AG04450 (cell line): ENCODE measurements at regions of chr6 and their contacts with region 1.

Region 1: DNA sequence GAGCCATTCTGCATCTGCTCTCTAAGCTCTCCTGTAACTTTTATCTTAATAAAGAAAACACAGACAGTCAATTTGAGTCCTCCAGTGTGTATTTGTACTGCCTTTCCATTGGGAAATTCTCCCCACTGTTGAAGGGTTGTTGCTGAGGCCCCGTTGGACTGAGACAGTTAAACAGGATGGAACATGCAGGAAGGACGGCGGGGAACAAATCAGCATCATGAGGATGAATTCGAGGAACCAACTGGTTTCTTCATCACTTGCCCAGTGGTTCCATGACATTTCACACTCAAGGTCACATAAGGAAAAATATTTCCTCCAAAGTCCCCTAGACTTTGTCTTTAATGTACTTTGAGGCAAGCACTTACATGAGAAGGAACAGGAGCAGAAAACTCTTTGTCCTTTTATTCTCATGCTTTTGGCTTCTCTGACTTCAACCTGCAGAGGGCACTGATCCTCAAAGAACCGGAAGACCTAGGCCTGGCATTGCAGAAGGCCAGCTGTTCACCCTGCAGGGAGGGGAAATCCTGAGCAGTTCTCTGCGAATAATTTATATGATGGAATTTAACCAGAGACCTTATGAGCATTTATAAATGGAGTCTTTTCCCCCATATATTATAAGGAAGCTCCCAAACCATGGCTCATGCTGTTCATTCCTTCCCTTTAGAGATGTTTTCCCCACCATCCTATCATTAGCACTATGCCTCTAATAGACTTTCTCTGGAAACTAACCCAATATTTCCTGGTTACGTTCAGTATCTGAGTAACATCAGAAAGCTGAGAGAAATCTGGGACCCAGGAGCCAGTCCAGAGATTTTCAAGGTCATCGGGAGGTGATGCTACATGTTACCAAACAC is 55.2 kb upstream of the ADGRF1 start:
- DNase-seq: peak; percentile 78
- H3K4me3 ChIP-seq: no peak overlapping the region
- H3K27ac ChIP-seq: no peak overlapping the region
- H3K27me3 ChIP-seq: no peaks in the 10 kb centered on the region
- CTCF ChIP-seq: peak; percentile 83

Region 2: DNA sequence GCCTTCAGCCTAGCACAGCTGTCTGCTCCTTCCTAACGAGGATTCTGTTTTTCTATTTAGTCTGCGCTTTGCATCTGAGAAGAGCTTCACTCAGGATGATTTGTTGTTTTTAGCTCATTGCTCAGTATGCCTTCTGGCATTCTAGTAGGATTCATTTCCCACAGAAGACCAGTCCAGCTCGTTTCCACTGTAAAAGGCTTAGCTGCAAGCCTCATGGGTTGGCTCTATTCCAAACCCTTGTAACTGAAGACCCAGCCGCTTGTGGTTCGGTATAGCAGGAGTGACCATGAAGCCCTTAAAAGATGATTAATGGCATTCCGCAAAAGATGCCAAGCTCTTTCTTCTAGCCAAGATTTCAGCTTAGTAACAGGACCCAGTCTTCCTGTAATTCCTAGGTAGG is 62.4 kb before region 1 on chr6:
- CTCF ChIA-PET with region 1: no interaction called
- POLR2A ChIA-PET with region 1: no interaction called
- DNase-seq: peak; percentile 15
- H3K4me3 ChIP-seq: no peak overlapping the region
- H3K27ac ChIP-seq: no peak overlapping the region
- H3K27me3 ChIP-seq: peaks cover 9% of the 10 kb centered on the region
- CTCF ChIP-seq: no peak

Region 3: DNA sequence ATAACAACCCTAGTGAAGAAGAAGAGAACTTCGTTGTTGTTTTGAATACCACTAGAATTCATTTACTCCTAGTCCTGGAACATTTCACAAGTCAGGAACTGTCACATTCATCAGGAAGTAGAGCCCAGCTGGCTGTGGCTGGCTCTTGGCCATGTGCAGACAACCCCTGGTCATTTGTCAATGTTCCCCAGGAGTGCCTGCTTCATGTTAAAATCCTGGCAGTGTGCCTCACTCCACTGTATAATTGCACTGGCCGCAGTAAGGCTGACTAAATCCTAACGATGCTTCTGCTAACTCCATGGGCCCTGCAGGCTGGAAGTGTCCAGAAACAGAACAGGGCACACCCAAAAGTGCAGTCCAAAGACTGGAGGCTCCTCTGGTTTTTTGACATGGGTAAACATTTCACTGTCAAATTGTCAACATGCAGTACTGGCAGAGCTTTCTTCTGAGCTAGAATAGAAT is 13.7 kb before region 1 on chr6:
- CTCF ChIA-PET with region 1: interaction called, 23 read pairs
- POLR2A ChIA-PET with region 1: no interaction called
- DNase-seq: peak; percentile 38
- H3K4me3 ChIP-seq: no peak overlapping the region
- H3K27ac ChIP-seq: no peak overlapping the region
- H3K27me3 ChIP-seq: peaks cover 4% of the 10 kb centered on the region
- CTCF ChIP-seq: no peak

Region 4: DNA sequence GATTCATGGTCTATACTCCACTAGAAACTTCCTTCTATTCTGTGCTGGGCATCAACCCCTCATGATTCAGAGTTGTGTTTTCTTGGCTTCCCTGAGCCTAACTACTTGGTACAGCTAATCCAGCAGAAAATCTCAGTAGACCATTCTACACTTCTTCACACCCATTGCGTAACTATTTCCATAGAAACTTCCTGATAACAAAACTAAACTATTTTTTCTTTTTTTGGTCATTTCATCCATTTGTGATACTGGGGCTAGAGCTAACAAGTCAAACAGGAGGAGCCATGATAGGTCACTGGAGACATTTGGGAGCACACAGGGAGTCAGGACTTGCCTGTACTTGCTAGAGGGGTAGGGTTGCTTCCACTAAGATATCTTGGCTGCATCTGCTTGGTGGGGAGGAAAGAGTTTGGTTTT is 72.5 kb after region 1 on chr6:
- CTCF ChIA-PET with region 1: interaction called, 6 read pairs
- POLR2A ChIA-PET with region 1: interaction called, 10 read pairs
- DNase-seq: no peak
- H3K4me3 ChIP-seq: no peak overlapping the region
- H3K27ac ChIP-seq: no peak overlapping the region
- H3K27me3 ChIP-seq: no peaks in the 10 kb centered on the region
- CTCF ChIP-seq: no peak

Region 5: DNA sequence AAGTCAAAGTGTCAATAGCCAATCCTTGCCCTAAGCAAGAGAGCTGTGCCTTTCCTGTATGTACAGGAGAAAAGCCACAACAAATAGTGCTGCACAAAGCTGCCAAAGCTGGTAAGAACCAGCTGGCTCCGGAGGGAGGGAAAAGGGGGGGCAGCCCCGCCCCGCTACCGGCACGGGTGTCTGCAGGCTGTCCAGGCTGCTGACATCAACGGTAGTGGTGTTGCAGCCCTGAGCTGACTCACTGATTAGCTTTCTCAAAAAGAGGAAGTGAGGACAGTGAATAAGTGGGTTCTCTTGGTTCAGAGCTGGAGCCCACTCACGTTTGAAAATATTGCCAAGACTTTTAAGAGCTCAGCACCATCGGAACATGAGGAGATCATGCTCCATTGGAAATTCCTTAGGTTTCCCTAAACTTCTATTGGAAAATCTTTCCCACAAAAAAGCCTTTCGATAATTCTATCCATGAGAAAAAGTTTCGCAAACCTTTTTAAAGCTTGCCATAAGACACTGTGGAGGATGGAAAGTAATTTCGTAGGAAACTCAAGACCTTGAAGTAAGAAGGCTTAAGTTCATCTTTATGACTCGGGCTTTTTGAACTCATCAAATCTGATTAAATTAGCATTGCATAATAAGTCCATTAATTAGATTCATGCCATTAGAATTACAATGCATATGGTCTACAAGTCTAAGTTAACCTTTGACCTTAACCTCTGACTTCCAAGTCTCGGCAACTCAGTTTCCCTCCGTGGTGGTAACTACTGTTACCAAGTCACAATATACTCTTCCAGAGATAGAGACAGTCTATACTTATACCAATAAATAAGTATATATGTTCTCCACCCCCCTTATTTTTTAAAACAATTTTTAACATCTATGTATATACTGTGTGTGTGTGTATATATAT is 145.4 kb after region 1 on chr6:
- CTCF ChIA-PET with region 1: interaction called, 13 read pairs
- POLR2A ChIA-PET with region 1: no interaction called
- DNase-seq: peak; percentile 69
- H3K4me3 ChIP-seq: no peak overlapping the region
- H3K27ac ChIP-seq: peak overlapping the region; percentile 57
- H3K27me3 ChIP-seq: no peaks in the 10 kb centered on the region
- CTCF ChIP-seq: no peak

Region 6: GRCh38 chr6:47302043-47302442 is 204.7 kb after region 1 on chr6:
- CTCF ChIA-PET with region 1: interaction called, 210 read pairs
- POLR2A ChIA-PET with region 1: interaction called, 4 read pairs
- DNase-seq: no peak
- H3K4me3 ChIP-seq: no peak overlapping the region
- H3K27ac ChIP-seq: no peak overlapping the region
- H3K27me3 ChIP-seq: no peaks in the 10 kb centered on the region
- CTCF ChIP-seq: no peak

Region 7: GRCh38 chr6:47309291-47310130 is 212.2 kb after region 1 on chr6 and contains the start of gene TNFRSF21:
- CTCF ChIA-PET with region 1: interaction called, 210 read pairs
- POLR2A ChIA-PET with region 1: interaction called, 4 read pairs
- DNase-seq: peak; percentile 68
- H3K4me3 ChIP-seq: peak within 1 kb of the TSS; percentile 95
- H3K27ac ChIP-seq: no peak within 1 kb of the TSS
- H3K27me3 ChIP-seq: peaks cover 20% of the 10 kb centered on the region
- CTCF ChIP-seq: peak; percentile 98
- polyA plus RNA-seq, gene TNFRSF21: 21.7 and 23.8 TPM in 2 replicates